ENCODE measurements at regions of chr7 and their contacts with region 1.

Region 1: GRCh38 chr7:155298834-155299534 is 1.3 kb downstream of the INSIG1 start:
- DNase-seq: peak; percentile 95
- H3K4me3 ChIP-seq: peak overlapping the region; percentile 80 to 98 (median 89)
- H3K27ac ChIP-seq: peak overlapping the region; percentile 91 to 99 (median 98)
- H3K4me1 ChIP-seq: peaks cover 0 to 33% (median 25%) of the 10 kb centered on the region in 4 donors
- H3K27me3 ChIP-seq: no peaks in the 10 kb centered on the region
- CTCF ChIP-seq: peak in 2 of 5 experiments; percentile 6 to 15
- EP300 ChIP-seq: no peak
- POLR2A ChIP-seq: peak; percentile 72

Region 2: DNA sequence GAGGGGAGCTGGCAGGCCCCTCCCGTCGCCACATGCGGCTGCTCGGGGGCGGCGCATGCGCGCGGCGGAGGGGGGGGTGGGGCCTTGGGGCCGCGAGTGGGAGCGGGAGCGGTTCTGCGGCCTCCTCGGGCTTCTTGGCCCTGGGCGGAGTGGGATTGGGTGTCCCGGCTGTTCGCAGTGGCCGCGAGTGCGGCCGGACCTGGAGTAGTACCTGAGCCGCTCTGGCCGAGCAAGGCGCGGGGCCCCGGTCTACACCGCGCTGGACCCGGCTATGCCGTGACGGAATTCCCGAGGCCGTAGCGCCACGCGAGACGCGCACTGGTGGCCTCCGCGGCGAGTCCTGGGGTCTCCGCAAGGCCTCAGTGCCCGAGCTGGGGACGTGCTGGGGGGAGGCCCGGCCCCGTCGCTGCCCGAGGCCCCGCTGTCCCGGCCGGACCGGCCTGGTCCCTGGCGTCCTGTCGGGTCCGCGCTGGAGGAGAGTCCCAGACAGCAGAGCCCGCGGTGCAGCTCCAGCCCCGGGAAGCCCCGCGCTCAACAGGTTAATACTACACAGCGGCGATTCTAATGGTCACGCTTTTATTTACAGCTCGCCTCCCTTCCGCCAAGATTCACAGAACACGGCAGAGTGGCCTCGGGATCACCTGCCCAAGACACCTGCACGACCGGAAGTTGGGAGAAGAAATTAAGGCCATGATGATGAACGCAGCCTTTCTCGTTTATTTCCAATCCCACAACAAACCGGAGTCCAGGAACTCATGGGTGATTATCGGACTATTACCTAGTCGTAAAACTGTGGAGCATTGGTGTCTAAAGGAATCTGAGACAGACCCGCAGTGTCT is 295.4 kb before region 1 on chr7:
- in situ Hi-C with region 1: no loop called
- intact Hi-C with region 1: loop called (anchors 5 kb)
- DNase-seq: peak; percentile 84
- H3K4me3 ChIP-seq: peak overlapping the region; percentile 83 to 97 (median 92)
- H3K27ac ChIP-seq: peak overlapping the region; percentile 89 to 95 (median 92)
- H3K4me1 ChIP-seq: peaks cover 0 to 25% (median 12%) of the 10 kb centered on the region in 4 donors
- H3K27me3 ChIP-seq: no peaks in the 10 kb centered on the region
- CTCF ChIP-seq: no peak
- EP300 ChIP-seq: no peak
- POLR2A ChIP-seq: peak; percentile 77

Region 3: DNA sequence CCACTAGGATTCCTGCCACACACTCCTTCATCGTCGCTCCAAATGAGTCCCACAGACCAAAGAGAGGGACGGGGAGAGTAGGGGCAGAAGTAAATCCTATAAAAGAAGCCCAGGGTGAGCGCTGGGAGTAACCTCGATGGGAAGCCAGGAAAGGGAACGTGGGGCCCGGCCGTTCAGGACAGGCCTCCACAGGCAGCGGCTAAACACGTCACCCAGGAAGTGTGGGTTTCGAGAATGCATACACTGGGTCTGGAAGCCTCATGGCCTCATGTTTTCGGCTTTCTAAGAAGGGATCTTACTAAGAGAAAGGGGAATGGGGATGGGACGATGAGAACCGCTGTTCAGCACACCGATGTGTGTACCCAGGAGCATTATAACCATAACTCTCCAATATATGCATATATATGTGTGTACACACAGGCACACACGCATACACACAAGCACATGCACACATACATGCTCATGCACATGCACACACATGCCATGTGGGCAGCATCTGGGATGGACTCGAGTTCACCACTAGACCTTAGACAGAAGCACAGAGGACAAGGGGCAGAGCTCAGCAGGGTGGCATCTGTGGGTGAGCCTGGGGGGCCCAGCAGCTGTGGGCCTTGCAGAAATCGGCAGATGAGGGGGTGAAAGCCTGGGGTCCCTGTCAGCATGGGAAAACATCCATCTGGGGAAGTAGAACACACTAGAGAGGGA is 262.1 kb after region 1 on chr7:
- in situ Hi-C with region 1: no loop called
- intact Hi-C with region 1: no loop called
- DNase-seq: no peak
- H3K4me3 ChIP-seq: no peak overlapping the region
- H3K27ac ChIP-seq: no peak overlapping the region
- H3K4me1 ChIP-seq: no peaks in the 10 kb centered on the region
- H3K27me3 ChIP-seq: peaks cover 5% of the 10 kb centered on the region
- CTCF ChIP-seq: no peak
- EP300 ChIP-seq: no peak
- POLR2A ChIP-seq: no peak

Region 4: GRCh38 chr7:155694851-155695250 is 395.9 kb after region 1 on chr7:
- in situ Hi-C with region 1: no loop called
- intact Hi-C with region 1: no loop called
- DNase-seq: no peak
- H3K4me3 ChIP-seq: no peak overlapping the region
- H3K27ac ChIP-seq: no peak overlapping the region
- H3K4me1 ChIP-seq: peaks cover 0 to 41% (median 14%) of the 10 kb centered on the region in 4 donors
- H3K27me3 ChIP-seq: no peaks in the 10 kb centered on the region
- CTCF ChIP-seq: no peak
- EP300 ChIP-seq: no peak
- POLR2A ChIP-seq: no peak